Natural killer cell (primary cell): ENCODE measurements at regions of chr1 and their contacts with region 1.

Region 1: DNA sequence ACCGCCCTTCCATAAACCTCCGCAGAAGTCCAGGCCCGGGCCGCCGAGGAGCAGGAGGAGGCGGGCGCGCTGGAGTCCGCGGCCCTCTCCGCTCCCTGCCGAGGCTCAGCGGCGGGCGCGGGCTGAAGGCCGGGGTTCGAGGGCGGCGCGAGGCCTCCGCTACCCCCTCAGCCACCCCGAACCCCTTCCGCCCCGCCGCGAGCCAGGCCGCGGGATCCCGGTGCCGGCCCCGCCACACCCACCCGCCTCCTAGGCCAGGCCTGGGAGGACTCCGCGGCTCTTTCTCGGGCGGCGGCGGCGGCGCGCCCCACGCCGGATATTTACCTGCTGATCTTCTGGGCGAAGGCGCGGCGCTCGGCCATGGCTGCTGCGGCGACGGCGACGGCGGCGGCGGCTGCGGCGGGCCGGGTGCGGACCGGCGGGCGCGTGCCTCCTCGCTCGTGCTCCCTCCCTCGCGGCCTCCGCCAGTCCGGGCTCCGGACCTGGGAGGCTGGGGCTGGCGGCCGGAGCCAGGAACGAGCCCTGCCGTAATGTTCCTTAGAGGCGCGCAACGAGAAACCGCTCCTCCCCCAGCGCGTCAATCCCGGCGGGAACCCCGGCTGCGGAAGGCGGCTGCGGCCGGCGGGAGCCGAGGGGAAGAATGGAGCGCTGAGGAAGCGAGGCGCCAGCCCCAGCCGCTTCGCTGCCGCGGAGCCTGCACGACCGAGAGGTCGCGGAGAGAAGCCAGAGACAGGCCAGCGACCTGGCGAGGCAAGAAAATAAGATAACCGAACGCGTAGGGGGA is at the start of gene DOCK7:
- DNase-seq: peak; percentile 30 to 67
- ATAC-seq: peak; percentile 52 to 68 (median 52)
- H3K4me3 ChIP-seq: peak within 1 kb of the TSS; percentile 67
- H3K4me3 Mint-ChIP-seq: peak within 1 kb of the TSS; percentile 88
- H3K27ac ChIP-seq: no peak within 1 kb of the TSS
- H3K27ac Mint-ChIP-seq: peak within 1 kb of the TSS in 1 of 2 donors; percentile 81
- H3K4me1 ChIP-seq: peaks cover 10% of the 10 kb centered on the region
- H3K4me1 Mint-ChIP-seq: peaks cover 0 to 12% of the 10 kb centered on the region in 2 donors
- H3K27me3 ChIP-seq: no peaks in the 10 kb centered on the region
- H3K27me3 Mint-ChIP-seq: peaks cover 0 to 6% of the 10 kb centered on the region in 2 donors
- CTCF ChIP-seq: no peak
- total RNA-seq, gene DOCK7: 4.3 to 13.1 (median 6.0) TPM

Region 2: DNA sequence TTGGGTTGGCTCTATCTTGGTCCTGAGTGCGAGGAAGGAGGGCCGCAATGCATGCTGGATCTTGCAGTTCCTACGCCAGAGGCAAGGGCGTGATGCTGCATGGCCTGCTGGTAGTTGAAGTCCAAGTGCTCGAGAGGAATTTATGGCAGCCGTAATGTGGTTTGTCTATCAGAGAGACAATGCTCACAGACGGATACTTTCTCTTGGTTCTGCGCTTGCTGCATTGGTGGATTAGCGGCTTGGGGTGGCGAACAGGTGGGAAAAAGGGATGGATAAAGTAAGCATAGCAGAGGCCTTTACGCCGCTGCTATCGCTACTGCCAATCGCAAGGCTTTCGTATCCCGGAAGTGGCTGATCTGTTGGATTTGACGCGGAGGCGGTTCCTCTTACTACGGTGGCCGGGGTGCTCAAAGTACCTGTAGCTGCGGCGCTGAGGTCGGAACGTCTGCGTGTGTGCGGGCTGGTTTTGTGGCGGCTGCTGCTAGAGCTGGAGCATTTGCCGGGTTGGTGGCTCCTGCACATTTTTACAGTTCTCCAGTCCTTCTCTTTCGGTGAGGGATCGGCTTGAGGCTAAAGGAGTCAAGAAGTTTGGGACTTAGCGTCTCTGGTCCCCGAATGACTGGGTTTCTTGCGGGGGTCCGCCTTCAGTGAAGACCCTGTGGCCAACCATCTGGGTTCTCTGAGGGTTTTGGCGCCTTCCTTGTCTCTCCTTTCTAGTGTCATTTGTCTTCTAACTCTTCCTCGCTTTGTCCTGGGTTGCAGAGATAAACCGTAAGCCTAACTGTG is 95.8 kb after region 1 on chr1 and contains the start of gene ATG4C:
- intact Hi-C with region 1: loop called (anchors 10 kb)
- DNase-seq: peak; percentile 87 to 96
- ATAC-seq: peak; percentile 97 to 98 (median 97)
- H3K4me3 ChIP-seq: peak within 1 kb of the TSS; percentile 63
- H3K4me3 Mint-ChIP-seq: no peak within 1 kb of the TSS
- H3K27ac ChIP-seq: peak within 1 kb of the TSS; percentile 75
- H3K27ac Mint-ChIP-seq: no peak within 1 kb of the TSS
- H3K4me1 ChIP-seq: peaks cover 10% of the 10 kb centered on the region
- H3K4me1 Mint-ChIP-seq: peaks cover 4 to 14% of the 10 kb centered on the region in 2 donors
- H3K27me3 ChIP-seq: no peaks in the 10 kb centered on the region
- H3K27me3 Mint-ChIP-seq: peaks cover 9 to 11% of the 10 kb centered on the region in 2 donors
- CTCF ChIP-seq: no peak
- total RNA-seq, gene ATG4C: 4.8 to 9.7 (median 6.3) TPM